Stomach (tissue), 19 donors: ENCODE measurements at regions of chr15 and their contacts with region 1.

Region 1: GRCh38 chr15:75029378-75030022 is 6.1 kb downstream of the PPCDC start:
- DNase-seq: peak; percentile 96
- H3K4me3 ChIP-seq: peak overlapping the region; percentile 2 to 23 (median 20)
- H3K27ac ChIP-seq: peak overlapping the region; percentile 5 to 75 (median 74)
- H3K4me1 ChIP-seq: peaks cover 16 to 49% (median 38%) of the 10 kb centered on the region in 4 donors
- H3K27me3 ChIP-seq: no peaks in the 10 kb centered on the region
- CTCF ChIP-seq: peak in 5 of 7 experiments; percentile 90 to 98 (median 94)
- EP300 ChIP-seq: no peak
- POLR2A ChIP-seq: no peak

Region 2: DNA sequence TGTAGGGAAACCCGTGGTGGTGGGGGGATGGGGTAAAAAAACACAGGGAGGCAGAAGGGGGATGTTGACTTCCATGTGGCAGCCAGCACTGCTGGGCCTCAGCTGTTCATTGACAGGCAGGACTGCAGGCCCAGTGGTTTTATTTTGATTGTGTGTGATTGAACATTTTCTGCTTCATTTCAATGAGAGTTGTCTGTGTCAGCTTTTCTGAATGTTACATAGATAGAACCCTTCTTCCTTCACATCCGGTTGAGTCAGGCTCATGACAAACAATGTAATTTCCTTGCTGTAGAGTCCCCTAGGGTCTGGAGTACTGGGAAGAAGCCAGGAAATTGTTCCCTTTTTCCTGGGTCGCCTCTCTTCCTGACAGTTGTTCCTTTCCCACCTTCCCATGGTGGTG is 64.7 kb before region 1 on chr15:
- intact Hi-C with region 1: no loop called
- DNase-seq: peak in 1 of 2 donors; percentile 34
- H3K4me3 ChIP-seq: no peak overlapping the region
- H3K27ac ChIP-seq: no peak overlapping the region
- H3K4me1 ChIP-seq: peaks cover 0 to 6% (median 3%) of the 10 kb centered on the region in 4 donors
- H3K27me3 ChIP-seq: peaks cover 0 to 8% (median 0%) of the 10 kb centered on the region in 3 donors
- CTCF ChIP-seq: no peak
- EP300 ChIP-seq: no peak
- POLR2A ChIP-seq: no peak

Region 3: DNA sequence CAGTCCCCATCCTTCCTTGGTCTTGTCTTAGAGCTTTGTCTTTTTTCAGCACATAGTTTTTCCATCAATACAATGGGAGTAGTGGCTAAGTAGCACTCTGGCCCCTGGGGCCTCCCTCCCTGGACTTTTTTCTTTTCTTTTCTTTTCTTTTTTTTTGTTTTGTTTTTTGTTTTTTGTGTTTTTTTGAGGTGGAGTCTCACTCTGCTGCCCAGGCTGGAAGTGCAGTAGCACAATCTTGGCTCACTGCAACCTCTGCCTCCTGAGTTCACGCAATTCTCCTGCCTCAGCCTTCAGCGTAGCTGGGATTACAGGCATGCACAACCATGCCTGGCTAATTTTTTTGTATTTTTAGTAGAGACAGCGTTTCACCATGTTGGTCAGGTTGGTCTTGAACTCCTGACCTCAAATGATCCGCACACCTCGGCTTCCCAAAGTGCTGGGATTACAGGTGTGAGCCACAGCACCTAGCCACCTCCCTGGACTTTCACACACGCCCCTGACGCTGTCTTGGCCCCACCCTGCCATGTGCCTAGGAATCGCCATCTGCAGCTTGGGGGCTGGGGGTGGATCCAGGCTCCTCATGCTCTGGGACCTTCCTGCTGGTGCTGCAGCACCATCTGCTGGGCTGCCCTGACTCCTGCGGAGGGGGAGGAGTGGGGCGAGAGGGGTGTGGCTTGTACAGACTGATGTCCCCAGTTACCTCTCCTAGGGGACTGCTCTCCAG is 175.0 kb after region 1 on chr15:
- intact Hi-C with region 1: loop called (anchors 5 kb)
- DNase-seq: peak; percentile 92 to 97
- H3K4me3 ChIP-seq: peak overlapping the region in 2 of 4 donors; percentile 71 to 95
- H3K27ac ChIP-seq: peak overlapping the region; percentile 18 to 98 (median 97)
- H3K4me1 ChIP-seq: peaks cover 36 to 83% (median 67%) of the 10 kb centered on the region in 4 donors
- H3K27me3 ChIP-seq: no peaks in the 10 kb centered on the region
- CTCF ChIP-seq: peak in 6 of 7 experiments; percentile 57 to 98 (median 91)
- EP300 ChIP-seq: no peak
- POLR2A ChIP-seq: no peak

Region 4: GRCh38 chr15:75307778-75308391 is 278.4 kb after region 1 on chr15:
- intact Hi-C with region 1: loop called (anchors 10 kb)
- DNase-seq: peak; percentile 69 to 82
- H3K4me3 ChIP-seq: no peak overlapping the region
- H3K27ac ChIP-seq: no peak overlapping the region
- H3K4me1 ChIP-seq: peaks cover 0 to 5% (median 2%) of the 10 kb centered on the region in 4 donors
- H3K27me3 ChIP-seq: peaks cover 0 to 44% (median 4%) of the 10 kb centered on the region in 3 donors
- CTCF ChIP-seq: peak in 5 of 7 experiments; percentile 19 to 53 (median 30)
- EP300 ChIP-seq: no peak
- POLR2A ChIP-seq: no peak

Region 5: DNA sequence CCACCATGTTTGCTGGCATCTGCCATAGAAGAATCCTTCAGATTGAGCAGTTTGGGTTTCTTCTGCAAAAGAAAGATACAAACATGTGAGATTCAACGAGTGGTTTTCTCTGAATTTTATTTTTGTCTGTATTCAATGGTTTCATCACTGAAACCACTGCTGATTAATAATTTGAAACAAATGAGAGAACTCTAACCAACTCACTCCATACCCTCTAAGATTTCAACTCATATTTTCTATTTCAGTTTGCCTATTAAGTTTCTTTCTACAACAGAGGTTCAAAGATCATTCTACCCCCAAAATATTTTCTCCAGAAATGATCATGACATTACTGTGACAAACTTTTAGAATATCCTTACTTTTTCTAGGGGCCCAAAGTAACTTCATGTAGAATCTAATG is 377.6 kb after region 1 on chr15:
- intact Hi-C with region 1: no loop called
- DNase-seq: no peak
- H3K4me3 ChIP-seq: no peak overlapping the region
- H3K27ac ChIP-seq: no peak overlapping the region
- H3K4me1 ChIP-seq: no peaks in the 10 kb centered on the region
- H3K27me3 ChIP-seq: no peaks in the 10 kb centered on the region
- CTCF ChIP-seq: no peak
- EP300 ChIP-seq: no peak
- POLR2A ChIP-seq: no peak